Psoas muscle (tissue), 8 donors: ENCODE measurements at regions of chr3 and their contacts with region 1.

Region 1: DNA sequence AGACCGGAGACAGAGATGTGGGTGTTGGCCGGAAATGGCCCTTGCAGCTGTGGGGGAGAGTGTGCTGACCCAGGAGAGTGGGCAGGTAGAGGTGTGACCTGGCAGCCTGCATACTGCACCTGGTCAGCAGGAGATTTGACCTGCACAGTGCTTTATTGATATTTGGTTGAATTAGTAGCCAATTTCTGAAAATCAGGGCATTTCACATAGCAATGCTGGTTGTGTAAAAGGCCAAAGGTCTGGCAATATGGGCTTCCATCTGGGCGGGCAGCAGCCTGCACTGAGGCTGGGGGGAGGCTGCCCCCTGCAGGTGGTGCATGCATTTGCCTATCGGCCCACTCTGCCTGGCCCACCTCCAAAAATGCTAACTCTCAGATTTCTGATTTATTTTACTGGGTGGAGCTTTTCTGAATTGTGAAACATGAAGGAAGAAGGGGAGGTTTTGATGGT is 9.4 kb upstream of the MGLL start:
- DNase-seq: peak; percentile 61 to 79
- ATAC-seq: peak; percentile 80 to 89 (median 84)
- H3K4me3 ChIP-seq: no peak overlapping the region
- H3K27ac ChIP-seq: no peak overlapping the region
- H3K4me1 ChIP-seq: no peaks in the 10 kb centered on the region
- H3K27me3 ChIP-seq: no peaks in the 10 kb centered on the region
- CTCF ChIP-seq: peak; percentile 84

Region 2: GRCh38 chr3:127574880-127575878 is 256.6 kb before region 1 on chr3:
- intact Hi-C with region 1: loop called (anchors 5 to 10 kb)
- DNase-seq: peak; percentile 83 to 91
- ATAC-seq: peak; percentile 87 to 97 (median 93)
- H3K4me3 ChIP-seq: no peak overlapping the region
- H3K27ac ChIP-seq: no peak overlapping the region
- H3K4me1 ChIP-seq: peaks cover 7% of the 10 kb centered on the region
- H3K27me3 ChIP-seq: no peaks in the 10 kb centered on the region
- CTCF ChIP-seq: peak; percentile 93

Region 3: DNA sequence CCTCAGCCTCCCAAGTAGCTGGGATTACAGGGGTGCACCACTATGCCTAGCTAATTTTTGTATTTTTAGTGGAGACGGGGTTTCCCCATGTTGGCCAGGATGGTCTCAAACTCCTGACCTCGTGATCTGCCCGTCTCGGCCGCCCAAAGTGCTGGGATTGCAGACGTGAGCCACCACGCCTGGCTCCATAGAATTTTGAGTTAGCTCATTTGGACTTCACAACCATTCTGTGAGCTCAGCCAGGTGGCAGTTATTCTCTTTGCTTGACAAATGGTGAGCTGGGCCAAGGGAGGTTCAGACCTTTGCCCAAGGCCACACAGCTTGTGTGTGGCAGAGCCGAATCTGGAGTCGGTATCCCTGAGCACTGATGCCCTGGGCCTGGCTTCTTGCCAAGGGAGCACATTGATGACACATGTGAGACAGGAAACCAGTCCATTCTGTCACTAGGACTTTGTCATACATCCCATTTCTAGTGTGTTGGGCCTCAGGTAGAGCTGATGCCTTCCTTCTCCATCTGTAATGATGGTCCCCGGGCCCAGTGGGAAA is 185.2 kb before region 1 on chr3:
- intact Hi-C with region 1: loop called in 1 of 2 experiments (anchors 5 kb)
- DNase-seq: no peak
- ATAC-seq: no peak
- H3K4me3 ChIP-seq: no peak overlapping the region
- H3K27ac ChIP-seq: no peak overlapping the region
- H3K4me1 ChIP-seq: no peaks in the 10 kb centered on the region
- H3K27me3 ChIP-seq: no peaks in the 10 kb centered on the region
- CTCF ChIP-seq: no peak

Region 4: DNA sequence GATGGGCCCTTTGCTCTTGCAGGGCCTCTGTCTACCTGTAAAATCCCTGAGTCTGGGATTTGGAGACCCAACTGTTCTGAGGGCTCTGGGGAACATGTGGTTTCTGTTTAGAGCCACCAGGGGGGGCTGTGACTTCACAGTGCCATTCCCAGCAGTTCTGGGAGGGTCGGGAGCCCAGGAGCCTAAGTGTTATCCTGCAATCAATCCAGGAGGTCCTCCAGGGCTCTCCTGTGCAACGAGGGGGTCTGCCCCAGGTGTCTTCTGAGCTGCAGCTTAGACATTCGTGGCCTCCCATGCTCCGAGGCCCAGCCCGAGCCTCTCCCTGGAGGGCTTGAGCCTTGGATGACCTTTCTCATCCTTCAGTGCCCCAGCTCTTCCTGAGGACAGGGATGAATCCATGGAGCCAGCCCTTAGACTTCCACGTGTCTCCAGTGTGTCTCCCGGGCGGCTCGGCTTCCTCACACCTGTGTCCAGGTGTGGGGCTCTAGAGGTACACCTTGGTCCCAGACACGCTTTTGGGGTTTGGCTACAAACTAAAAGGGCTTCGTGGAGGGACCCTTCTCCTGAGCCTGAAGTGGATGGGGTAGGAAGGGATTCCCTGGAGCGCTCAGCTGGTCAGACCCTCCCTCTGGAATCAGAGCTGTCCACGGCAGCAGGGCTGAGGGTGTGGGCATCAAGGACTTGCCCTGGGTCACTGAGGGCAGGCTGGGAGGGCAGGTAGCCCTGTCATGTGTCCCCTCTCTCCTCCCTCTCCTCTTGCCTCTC is 179.3 kb before region 1 on chr3:
- intact Hi-C with region 1: loop called (anchors 2 to 5 kb)
- DNase-seq: peak; percentile 58 to 76
- ATAC-seq: peak; percentile 85 to 97 (median 90)
- H3K4me3 ChIP-seq: no peak overlapping the region
- H3K27ac ChIP-seq: no peak overlapping the region
- H3K4me1 ChIP-seq: no peaks in the 10 kb centered on the region
- H3K27me3 ChIP-seq: no peaks in the 10 kb centered on the region
- CTCF ChIP-seq: peak; percentile 93

Region 5: DNA sequence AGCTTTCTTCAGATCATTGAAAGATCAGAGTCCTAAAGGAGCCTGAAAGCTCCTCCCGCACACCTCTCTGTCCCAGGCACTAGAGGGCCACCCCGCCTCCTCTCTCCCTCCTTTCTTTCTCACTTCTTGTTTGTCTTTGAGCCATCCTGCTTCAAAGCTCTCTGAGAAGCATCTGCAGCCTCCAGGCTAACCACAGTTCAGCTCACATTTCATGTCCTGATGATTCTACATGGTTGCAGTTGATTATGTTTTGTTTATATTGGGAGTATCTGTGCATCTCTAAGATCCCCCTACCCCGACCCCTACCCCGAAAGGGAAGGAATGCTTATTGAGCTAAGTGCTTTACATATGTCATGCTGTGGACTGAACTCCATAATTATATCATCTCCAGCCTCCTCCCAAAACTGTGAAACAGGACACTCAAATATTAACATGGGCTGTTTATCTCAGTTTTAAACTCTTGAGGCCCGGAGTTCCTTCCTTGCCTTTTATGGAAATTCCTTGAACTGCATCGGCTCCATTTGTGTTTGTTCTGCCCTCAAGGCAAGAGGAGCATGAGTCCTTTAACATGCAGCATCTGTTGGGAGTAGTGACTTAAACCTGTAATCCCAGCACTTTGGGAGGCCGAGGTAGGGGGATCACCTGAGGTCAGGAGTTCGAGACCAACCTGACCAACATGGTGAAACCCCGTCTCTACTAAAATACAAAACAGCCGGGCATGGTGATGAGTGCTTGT is 40.4 kb before region 1 on chr3:
- intact Hi-C with region 1: no loop called
- DNase-seq: peak in 1 of 2 donors; percentile 34
- ATAC-seq: peak in 3 of 4 donors; percentile 28 to 48 (median 40)
- H3K4me3 ChIP-seq: no peak overlapping the region
- H3K27ac ChIP-seq: peak overlapping the region; percentile 92
- H3K4me1 ChIP-seq: peaks cover 72% of the 10 kb centered on the region
- H3K27me3 ChIP-seq: no peaks in the 10 kb centered on the region
- CTCF ChIP-seq: peak; percentile 34